Heart left ventricle (tissue), 16 donors: ENCODE measurements at regions of chr2 and their contacts with region 1.

Region 1: DNA sequence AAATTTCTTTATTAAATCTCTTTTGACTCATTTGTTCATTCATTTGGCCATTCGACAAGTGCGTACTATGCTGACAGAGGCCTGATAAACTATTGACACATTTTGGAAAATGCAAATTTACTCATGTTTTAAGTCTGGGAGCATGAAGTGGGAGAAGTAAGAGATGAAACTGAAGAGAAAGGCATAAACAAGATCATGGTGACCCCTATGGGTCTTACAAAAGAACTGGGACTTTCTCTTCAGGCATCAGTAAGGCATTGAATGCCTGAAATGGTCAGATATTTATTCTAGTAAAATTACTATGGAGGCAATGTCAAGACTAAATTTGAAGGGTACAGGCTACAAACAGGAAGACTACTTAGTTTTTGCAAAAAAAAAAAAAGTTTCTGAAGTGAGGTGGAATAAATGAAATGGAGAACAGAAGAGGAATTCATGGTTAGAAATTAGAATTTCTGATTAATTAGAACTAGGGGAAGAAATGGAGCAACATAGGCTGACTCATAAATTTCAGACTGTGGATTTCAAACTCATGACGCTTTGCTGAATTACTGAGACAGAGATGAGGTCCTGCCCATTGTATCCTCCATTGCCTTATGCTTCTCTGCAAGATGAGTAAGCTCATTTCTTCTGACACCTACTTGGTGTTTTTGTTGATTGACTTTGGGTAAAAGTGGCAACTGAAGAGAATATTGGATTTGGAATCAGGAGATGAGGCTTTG is 32.7 kb downstream of the VSNL1 start:
- DNase-seq: no peak
- ATAC-seq: no peak
- H3K4me3 ChIP-seq: no peak overlapping the region
- H3K27ac ChIP-seq: no peak overlapping the region
- H3K4me1 ChIP-seq: peaks cover 0 to 3% (median 0%) of the 10 kb centered on the region in 12 donors
- H3K27me3 ChIP-seq: no peaks in the 10 kb centered on the region
- CTCF ChIP-seq: peak in 4 of 12 donors; percentile 13 to 35 (median 22)
- POLR2A ChIP-seq: no peak

Region 2: DNA sequence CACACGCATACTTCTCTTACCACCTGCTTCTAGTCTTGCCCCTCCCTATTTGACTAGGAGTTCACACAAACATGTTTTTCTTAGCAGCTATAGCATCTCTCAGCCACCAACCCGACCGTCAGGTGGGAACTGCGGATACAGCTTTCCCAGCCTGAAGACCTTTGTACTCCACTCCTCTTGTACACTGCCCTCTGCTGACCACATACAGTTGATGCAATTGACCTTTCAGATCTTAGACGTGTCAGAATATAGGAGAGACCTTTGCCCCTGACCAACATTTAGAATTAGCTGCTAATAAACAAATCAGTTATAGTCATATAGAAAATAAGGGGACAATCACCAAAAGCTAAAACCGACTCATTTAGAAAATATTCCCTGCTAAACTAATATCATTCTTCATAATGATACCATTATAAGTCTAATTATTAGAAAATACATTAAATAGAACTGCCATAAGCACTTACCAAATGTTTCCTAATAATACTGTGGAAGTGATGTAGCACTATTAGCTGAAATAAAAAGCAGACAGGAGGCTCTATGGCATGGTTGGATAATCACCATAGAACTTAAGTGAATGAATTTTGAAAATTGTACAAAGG is 263.4 kb before region 1 on chr2:
- intact Hi-C with region 1: loop called in 1 of 10 experiments (anchors 10 kb)
- DNase-seq: peak in 1 of 5 donors; percentile 11
- ATAC-seq: peak in 3 of 4 donors; percentile 30 to 72 (median 45)
- H3K4me3 ChIP-seq: no peak overlapping the region
- H3K27ac ChIP-seq: no peak overlapping the region
- H3K4me1 ChIP-seq: no peaks in the 10 kb centered on the region
- H3K27me3 ChIP-seq: no peaks in the 10 kb centered on the region
- CTCF ChIP-seq: peak; percentile 44 to 72 (median 61)
- POLR2A ChIP-seq: no peak

Region 3: GRCh38 chr2:17470855-17471641 is 102.2 kb before region 1 on chr2:
- intact Hi-C with region 1: no loop called
- DNase-seq: no peak
- ATAC-seq: peak in 1 of 4 donors; percentile 44
- H3K4me3 ChIP-seq: no peak overlapping the region
- H3K27ac ChIP-seq: no peak overlapping the region
- H3K4me1 ChIP-seq: no peaks in the 10 kb centered on the region
- H3K27me3 ChIP-seq: no peaks in the 10 kb centered on the region
- CTCF ChIP-seq: peak in 6 of 12 donors; percentile 10 to 30 (median 19)
- POLR2A ChIP-seq: no peak